Calu3 (cell line): ENCODE measurements at regions of chr7 and their contacts with region 1.

Region 1: DNA sequence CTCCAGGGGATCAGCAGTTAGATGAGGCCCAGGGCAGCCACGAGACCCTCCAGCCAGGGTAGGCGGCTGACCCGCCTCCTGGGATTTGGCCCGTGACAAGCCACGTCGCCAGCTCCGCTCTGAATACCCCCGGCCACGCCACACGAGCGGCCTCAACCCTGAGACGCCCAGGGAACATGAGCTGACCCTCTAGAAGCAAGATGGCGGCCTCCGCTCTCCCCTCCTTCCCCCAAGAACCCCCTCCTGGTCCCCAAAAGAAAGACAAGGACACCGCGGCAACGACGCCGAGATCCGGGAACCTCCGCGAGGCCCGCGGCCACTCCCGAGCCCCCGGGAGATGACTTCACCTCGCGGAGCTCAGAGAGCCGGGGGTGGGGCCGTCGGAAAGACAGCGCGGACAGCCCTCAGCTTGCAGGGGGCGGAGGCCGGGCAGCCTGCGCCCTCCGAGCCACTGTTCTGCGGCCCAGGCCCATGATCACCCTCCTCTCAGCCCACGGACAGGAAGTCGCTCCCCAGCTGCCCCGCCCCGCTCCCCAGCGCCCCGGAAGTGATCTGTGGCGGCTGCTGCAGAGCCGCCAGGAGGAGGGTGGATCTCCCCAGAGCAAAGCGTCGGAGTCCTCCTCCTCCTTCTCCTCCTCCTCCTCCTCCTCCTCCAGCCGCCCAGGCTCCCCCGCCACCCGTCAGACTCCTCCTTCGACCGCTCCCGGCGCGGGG is at the start of gene RALA:
- DNase-seq: peak; percentile 98
- H3K4me3 Mint-ChIP-seq: peak within 1 kb of the TSS; percentile 81
- H3K27ac Mint-ChIP-seq: peak within 1 kb of the TSS; percentile 85
- H3K4me1 Mint-ChIP-seq: peaks cover 38% of the 10 kb centered on the region
- H3K27me3 Mint-ChIP-seq: no peaks in the 10 kb centered on the region
- CTCF ChIP-seq: no peak
- total RNA-seq, gene RALA: 58.1 and 64.8 TPM in 2 replicates

Region 2: DNA sequence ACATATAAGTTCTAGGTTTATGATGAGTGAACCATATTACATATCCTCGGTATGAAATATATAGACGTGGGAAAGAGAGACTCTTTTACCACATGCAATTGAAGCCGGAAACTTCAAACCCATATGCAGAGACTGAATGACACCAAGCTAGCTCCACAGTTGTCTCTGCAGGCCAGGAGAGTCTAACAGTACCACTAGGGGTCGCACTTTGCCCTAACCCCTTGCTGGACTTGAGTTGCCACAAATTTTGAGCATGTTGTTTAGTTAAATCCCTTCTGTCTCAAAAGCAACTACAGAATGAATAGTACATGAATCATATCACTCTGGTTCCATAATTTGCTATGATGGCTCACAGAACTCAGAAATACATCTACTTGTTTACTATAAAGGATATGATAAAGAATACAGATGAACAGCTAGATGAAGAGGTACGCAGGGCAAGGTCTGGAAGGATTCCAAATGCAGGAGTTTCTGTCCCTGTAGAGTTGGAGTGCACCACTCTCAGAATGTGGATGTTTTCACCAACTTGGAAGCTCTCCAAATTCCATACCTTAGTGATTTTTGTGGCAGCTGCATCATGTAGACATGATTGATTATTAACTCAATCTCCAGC is 169.3 kb before region 1 on chr7:
- CTCF ChIA-PET with region 1: no interaction called
- intact Hi-C with region 1: no loop called
- DNase-seq: peak; percentile 76
- H3K4me3 Mint-ChIP-seq: no peak overlapping the region
- H3K27ac Mint-ChIP-seq: no peak overlapping the region
- H3K4me1 Mint-ChIP-seq: no peaks in the 10 kb centered on the region
- H3K27me3 Mint-ChIP-seq: peaks cover 22% of the 10 kb centered on the region
- CTCF ChIP-seq: peak; percentile 83

Region 3: GRCh38 chr7:39589323-39590111 is 33.7 kb before region 1 on chr7:
- CTCF ChIA-PET with region 1: interaction called, 11 read pairs
- intact Hi-C with region 1: loop called (anchors 5 kb)
- DNase-seq: peak; percentile 58
- H3K4me3 Mint-ChIP-seq: no peak overlapping the region
- H3K27ac Mint-ChIP-seq: peak overlapping the region; percentile 54
- H3K4me1 Mint-ChIP-seq: peaks cover 19% of the 10 kb centered on the region
- H3K27me3 Mint-ChIP-seq: no peaks in the 10 kb centered on the region
- CTCF ChIP-seq: no peak

Region 4: GRCh38 chr7:39609113-39609934 is 13.9 kb before region 1 on chr7:
- CTCF ChIA-PET with region 1: interaction called, 12 read pairs
- intact Hi-C with region 1: no loop called
- DNase-seq: peak; percentile 64
- H3K4me3 Mint-ChIP-seq: peak overlapping the region; percentile 23
- H3K27ac Mint-ChIP-seq: peak overlapping the region; percentile 51
- H3K4me1 Mint-ChIP-seq: peaks cover 56% of the 10 kb centered on the region
- H3K27me3 Mint-ChIP-seq: no peaks in the 10 kb centered on the region
- CTCF ChIP-seq: no peak

Region 5: DNA sequence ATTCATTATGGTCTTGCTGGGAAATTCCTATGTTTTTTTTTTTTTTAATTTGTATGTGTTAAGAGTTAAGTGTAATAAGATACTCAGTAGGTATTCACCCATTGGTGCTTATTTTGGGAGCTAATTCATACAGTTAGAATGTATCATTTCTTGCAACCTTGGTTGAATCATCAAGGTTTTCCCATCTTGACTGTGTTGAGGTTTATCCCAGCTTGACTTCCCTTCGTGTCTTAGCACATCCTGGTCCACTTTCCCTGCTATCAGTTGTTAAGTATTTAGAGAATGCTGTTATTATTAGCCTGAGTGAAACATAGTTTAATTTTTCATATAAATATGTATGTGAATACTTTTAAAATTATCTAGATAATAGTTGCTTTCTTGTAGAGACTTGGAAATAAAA is 21.0 kb after region 1 on chr7:
- CTCF ChIA-PET with region 1: no interaction called
- intact Hi-C with region 1: no loop called
- DNase-seq: no peak
- H3K4me3 Mint-ChIP-seq: no peak overlapping the region
- H3K27ac Mint-ChIP-seq: no peak overlapping the region
- H3K4me1 Mint-ChIP-seq: peaks cover 24% of the 10 kb centered on the region
- H3K27me3 Mint-ChIP-seq: no peaks in the 10 kb centered on the region
- CTCF ChIP-seq: no peak

Region 6: GRCh38 chr7:39703144-39703543 is 80.0 kb after region 1 on chr7:
- CTCF ChIA-PET with region 1: no interaction called
- intact Hi-C with region 1: no loop called
- DNase-seq: no peak
- H3K4me3 Mint-ChIP-seq: no peak overlapping the region
- H3K27ac Mint-ChIP-seq: peak overlapping the region; percentile 22
- H3K4me1 Mint-ChIP-seq: no peaks in the 10 kb centered on the region
- H3K27me3 Mint-ChIP-seq: no peaks in the 10 kb centered on the region
- CTCF ChIP-seq: peak; percentile 17

Region 7: GRCh38 chr7:39746103-39746819 is 123.1 kb after region 1 on chr7:
- CTCF ChIA-PET with region 1: interaction called, 15 read pairs
- intact Hi-C with region 1: loop called (anchors 2 kb)
- DNase-seq: peak; percentile 89
- H3K4me3 Mint-ChIP-seq: no peak overlapping the region
- H3K27ac Mint-ChIP-seq: no peak overlapping the region
- H3K4me1 Mint-ChIP-seq: peaks cover 30% of the 10 kb centered on the region
- H3K27me3 Mint-ChIP-seq: no peaks in the 10 kb centered on the region
- CTCF ChIP-seq: peak; percentile 79